Heart right ventricle (tissue), 16 donors: ENCODE measurements at regions of chr13 and their contacts with region 1.

Region 1: DNA sequence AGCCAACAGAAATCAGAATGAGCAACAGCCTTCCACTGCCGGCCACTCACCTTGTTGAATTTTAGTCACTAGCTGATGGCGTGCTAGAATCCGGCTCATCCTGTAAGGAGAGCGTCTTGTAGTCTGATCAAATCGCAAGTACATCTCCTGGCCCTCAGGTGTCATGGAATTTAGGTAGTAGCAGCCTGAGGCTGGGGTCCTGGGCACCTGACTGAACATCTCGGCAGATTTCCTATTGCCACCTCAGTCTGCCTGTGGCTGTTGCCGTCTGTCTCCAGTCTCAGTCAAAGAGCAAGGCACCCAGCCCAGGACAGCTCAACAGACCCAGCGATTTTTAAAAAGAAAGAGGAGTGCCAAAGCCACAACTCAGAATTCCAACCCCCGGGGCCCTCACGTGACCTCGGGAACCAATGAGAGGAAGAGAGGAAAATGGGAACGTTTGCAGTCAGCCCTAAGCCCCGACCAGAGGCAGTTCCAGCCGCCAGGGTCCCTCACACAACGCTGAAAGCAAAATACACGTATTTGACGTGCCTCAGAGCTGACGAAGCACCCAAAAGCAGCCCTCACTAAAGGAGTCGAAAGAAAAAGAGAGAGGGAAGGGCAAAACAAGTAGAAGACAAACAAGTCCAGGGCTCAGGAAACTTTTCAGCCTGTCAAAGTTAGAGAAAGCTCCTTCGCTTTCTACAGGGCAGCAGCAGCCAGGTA is at the start of gene STARD13:
- DNase-seq: peak; percentile 89 to 97
- ATAC-seq: peak; percentile 95 to 97 (median 96)
- H3K4me3 ChIP-seq: peak within 1 kb of the TSS; percentile 59 to 84 (median 72)
- H3K27ac ChIP-seq: peak within 1 kb of the TSS; percentile 84 to 98 (median 95)
- H3K4me1 ChIP-seq: peaks cover 5 to 60% (median 47%) of the 10 kb centered on the region in 9 donors
- H3K27me3 ChIP-seq: no peaks in the 10 kb centered on the region
- CTCF ChIP-seq: peak; percentile 15 to 69 (median 40)
- total RNA-seq, gene STARD13: 18.2 to 38.3 (median 28.5) TPM

Region 2: GRCh38 chr13:33236021-33236420 is 49.6 kb before region 1 on chr13:
- intact Hi-C with region 1: loop called in 5 of 10 experiments (anchors 2 to 10 kb)
- DNase-seq: no peak
- ATAC-seq: peak in 1 of 8 donors; percentile 36
- H3K4me3 ChIP-seq: no peak overlapping the region
- H3K27ac ChIP-seq: peak overlapping the region in 6 of 10 donors; percentile 13 to 64 (median 46)
- H3K4me1 ChIP-seq: peaks cover 0 to 47% (median 30%) of the 10 kb centered on the region in 9 donors
- H3K27me3 ChIP-seq: no peaks in the 10 kb centered on the region
- CTCF ChIP-seq: no peak

Region 3: GRCh38 chr13:33494596-33495204 is 209.1 kb after region 1 on chr13:
- intact Hi-C with region 1: loop called in 1 of 10 experiments (anchors 10 kb)
- DNase-seq: no peak
- ATAC-seq: peak; percentile 80 to 95 (median 90)
- H3K4me3 ChIP-seq: no peak overlapping the region
- H3K27ac ChIP-seq: peak overlapping the region in 9 of 10 donors; percentile 45 to 80 (median 68)
- H3K4me1 ChIP-seq: peaks cover 0 to 31% (median 22%) of the 10 kb centered on the region in 9 donors
- H3K27me3 ChIP-seq: no peaks in the 10 kb centered on the region
- CTCF ChIP-seq: no peak

Region 4: DNA sequence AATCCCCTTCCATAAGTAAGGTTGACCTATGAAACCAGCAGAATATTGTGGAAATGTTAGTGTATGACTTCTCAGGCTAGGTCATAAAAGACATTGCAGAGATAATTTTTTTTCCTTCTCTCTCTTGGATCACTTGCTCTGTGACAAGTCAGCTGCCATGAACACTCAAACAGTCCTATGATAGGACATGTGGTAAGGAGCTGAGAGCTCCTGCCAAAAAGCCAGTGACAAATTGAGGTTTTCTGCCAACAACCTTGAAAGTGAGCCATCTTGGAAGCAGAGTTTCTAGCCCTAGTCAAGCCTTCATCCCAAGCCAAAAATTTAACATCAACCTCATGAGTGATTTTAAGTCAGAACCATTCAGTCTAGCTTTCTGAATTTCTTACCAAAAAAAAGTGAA is 1385.6 kb after region 1 on chr13:
- intact Hi-C with region 1: no loop called
- DNase-seq: peak in 1 of 2 donors; percentile 70
- ATAC-seq: peak; percentile 90 to 96 (median 94)
- H3K4me3 ChIP-seq: no peak overlapping the region
- H3K27ac ChIP-seq: peak overlapping the region in 8 of 10 donors; percentile 13 to 80 (median 66)
- H3K4me1 ChIP-seq: peaks cover 0 to 30% (median 7%) of the 10 kb centered on the region in 9 donors
- H3K27me3 ChIP-seq: no peaks in the 10 kb centered on the region
- CTCF ChIP-seq: no peak